GM12878 (cell line): ENCODE measurements at regions of chr13 and their contacts with region 1.

Region 1: DNA sequence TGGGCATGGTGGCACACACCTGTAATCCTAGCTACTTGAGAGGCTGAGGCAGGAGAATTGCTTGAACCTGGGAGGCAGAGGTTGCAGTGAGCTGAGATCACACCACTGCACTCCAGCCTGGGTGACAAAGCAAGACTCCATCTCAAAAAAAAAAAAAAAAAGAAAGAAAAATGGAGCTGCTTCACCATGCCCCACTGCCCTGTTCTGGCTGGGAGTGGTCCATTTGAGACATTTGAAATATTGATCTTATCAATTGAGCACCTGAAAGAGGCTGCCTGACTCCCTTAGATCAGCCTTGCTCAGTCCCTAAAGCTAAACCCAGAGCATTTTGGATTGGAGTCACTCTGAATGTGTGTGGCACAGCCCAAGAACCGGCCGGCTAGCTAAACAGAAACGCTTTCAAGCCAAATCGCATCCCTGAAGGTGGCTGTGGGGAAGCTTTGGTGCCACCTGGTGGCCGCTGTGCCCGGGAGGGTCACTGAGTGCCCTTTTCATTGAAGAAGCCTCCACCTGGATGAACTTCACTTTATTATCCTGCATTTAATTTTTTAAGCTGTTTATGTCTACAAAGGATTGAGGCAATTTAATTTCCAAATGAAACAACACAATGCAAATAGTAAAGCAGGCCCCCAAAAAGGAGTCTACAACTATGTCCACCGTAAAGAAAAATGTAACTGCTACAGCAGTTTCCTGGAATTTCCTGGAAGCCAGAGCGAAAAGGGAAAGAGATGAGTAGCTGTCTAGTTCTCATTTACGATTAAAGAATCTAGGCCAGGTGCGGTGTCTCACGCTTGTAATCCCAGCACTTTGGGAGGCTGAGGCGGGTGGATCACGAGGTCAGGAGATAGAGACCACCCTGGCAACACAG is 53.1 kb upstream of the SERPINE3 start:
- DNase-seq: peak; percentile 7
- ATAC-seq: peak; percentile 98
- H3K4me3 ChIP-seq: no peak overlapping the region
- H3K27ac ChIP-seq: no peak overlapping the region
- H3K4me1 ChIP-seq: no peaks in the 10 kb centered on the region
- H3K27me3 ChIP-seq: no peaks in the 10 kb centered on the region; a peak in 1 of 4 replicates
- CTCF ChIP-seq: peak; percentile 86 to 94 (median 93)
- EP300 ChIP-seq: no peak
- POLR2A ChIP-seq: no peak
- RAD21 ChIP-seq: peak; percentile 85

Region 2: DNA sequence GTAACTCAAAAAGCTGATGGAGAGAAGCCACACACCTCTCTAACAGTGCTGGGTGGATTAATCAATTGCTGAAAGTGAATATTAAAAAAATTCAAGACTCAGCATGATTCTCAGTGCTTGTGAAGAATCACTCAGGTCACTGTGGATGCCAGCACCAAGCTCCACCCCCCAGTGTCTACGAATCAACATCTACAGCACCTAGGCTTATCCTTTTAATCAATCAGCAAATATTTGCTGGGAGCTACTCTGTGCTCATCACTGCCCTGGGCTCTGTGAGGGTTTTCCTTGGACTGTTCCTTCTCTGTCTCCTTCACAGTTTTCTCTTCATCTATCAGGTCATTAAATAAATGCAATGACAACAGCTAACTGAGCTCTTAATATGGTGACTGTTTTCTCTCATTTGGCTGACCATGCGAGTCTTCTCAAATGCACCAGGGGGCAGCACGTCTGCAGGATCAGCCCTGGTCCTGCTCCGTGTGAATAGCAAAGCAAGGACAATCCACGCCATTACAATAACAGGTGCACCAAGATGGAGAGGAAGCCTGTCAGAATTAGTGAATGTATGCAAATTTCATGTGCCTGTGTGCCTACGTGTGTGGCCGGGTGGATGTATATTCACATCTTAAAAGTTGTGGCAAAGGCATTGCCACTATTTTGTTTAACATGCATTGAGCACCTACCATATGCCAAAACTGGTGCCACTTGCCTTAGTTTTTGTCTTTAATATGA is 160.7 kb before region 1 on chr13:
- CTCF ChIA-PET with region 1: interaction called, 242 read pairs
- POLR2A ChIA-PET with region 1: interaction called, 7 read pairs
- RAD21 ChIA-PET with region 1: interaction called, 131 read pairs
- SMC1A ChIA-PET with region 1: interaction called, 112 read pairs
- in situ Hi-C with region 1: loop called (anchors 5 kb)
- intact Hi-C with region 1: loop called (anchors 1 kb)
- DNase-seq: peak; percentile 16
- ATAC-seq: peak; percentile 89
- H3K4me3 ChIP-seq: no peak overlapping the region
- H3K27ac ChIP-seq: no peak overlapping the region
- H3K4me1 ChIP-seq: no peaks in the 10 kb centered on the region
- H3K27me3 ChIP-seq: no peaks in the 10 kb centered on the region; a peak in 1 of 4 replicates
- CTCF ChIP-seq: peak; percentile 78 to 89 (median 86)
- EP300 ChIP-seq: no peak
- POLR2A ChIP-seq: no peak
- RAD21 ChIP-seq: peak; percentile 89

Region 3: GRCh38 chr13:51148952-51149573 is 137.3 kb before region 1 on chr13:
- CTCF ChIA-PET with region 1: interaction called, 26 read pairs
- POLR2A ChIA-PET with region 1: no interaction called
- RAD21 ChIA-PET with region 1: interaction called, 11 read pairs
- SMC1A ChIA-PET with region 1: interaction called, 4 read pairs
- in situ Hi-C with region 1: no loop called
- intact Hi-C with region 1: no loop called
- DNase-seq: no peak
- ATAC-seq: peak; percentile 24; the same call in 1 of the 3 replicates
- H3K4me3 ChIP-seq: no peak overlapping the region
- H3K27ac ChIP-seq: no peak overlapping the region
- H3K4me1 ChIP-seq: no peaks in the 10 kb centered on the region
- H3K27me3 ChIP-seq: peaks cover 3 to 6% of the 10 kb centered on the region in 2 experiments; a peak in 2 of 4 replicates
- CTCF ChIP-seq: peak; percentile 21 to 40 (median 28); a peak in 4 of 6 replicates
- EP300 ChIP-seq: no peak
- POLR2A ChIP-seq: no peak
- RAD21 ChIP-seq: peak; percentile 59

Region 4: DNA sequence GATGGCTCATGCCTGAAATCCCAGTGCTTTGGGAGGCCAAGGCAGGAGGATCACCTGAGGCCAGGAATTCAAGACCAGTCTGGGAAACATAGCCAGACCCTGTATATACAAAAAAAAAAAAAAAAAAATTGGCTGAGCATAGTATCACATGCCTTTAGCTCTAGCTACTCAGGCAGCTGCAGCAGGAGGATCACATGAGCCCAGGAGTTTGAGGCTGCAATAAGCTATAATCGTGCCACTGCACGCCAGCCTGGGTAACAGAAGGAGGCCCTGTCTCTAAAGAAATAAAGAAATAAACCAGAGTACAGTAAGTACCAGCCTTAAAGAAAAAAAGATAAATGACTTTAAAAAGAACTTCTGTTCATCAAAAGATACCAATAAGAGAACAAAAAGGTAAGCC is 11.3 kb before region 1 on chr13:
- CTCF ChIA-PET with region 1: interaction called, 18 read pairs
- POLR2A ChIA-PET with region 1: no interaction called
- RAD21 ChIA-PET with region 1: interaction called, 7 read pairs
- SMC1A ChIA-PET with region 1: interaction called, 5 read pairs
- in situ Hi-C with region 1: no loop called
- intact Hi-C with region 1: no loop called
- DNase-seq: no peak
- ATAC-seq: no peak
- H3K4me3 ChIP-seq: no peak overlapping the region
- H3K27ac ChIP-seq: no peak overlapping the region
- H3K4me1 ChIP-seq: no peaks in the 10 kb centered on the region
- H3K27me3 ChIP-seq: peaks cover 3 to 9% of the 10 kb centered on the region in 2 experiments; a peak in 1 of 4 replicates
- CTCF ChIP-seq: no peak
- EP300 ChIP-seq: no peak
- POLR2A ChIP-seq: no peak
- RAD21 ChIP-seq: no peak

Region 5: GRCh38 chr13:51303063-51303552 is 16.7 kb after region 1 on chr13:
- CTCF ChIA-PET with region 1: interaction called, 25 read pairs
- POLR2A ChIA-PET with region 1: no interaction called
- RAD21 ChIA-PET with region 1: interaction called, 4 read pairs
- SMC1A ChIA-PET with region 1: interaction called, 4 read pairs
- in situ Hi-C with region 1: no loop called
- intact Hi-C with region 1: no loop called
- DNase-seq: no peak
- ATAC-seq: no peak
- H3K4me3 ChIP-seq: no peak overlapping the region
- H3K27ac ChIP-seq: no peak overlapping the region
- H3K4me1 ChIP-seq: no peaks in the 10 kb centered on the region
- H3K27me3 ChIP-seq: no peaks in the 10 kb centered on the region
- CTCF ChIP-seq: no peak
- EP300 ChIP-seq: no peak
- POLR2A ChIP-seq: no peak
- RAD21 ChIP-seq: no peak

Region 6: GRCh38 chr13:51803422-51804294 is 517.3 kb after region 1 on chr13 and contains the start of gene DHRS12:
- CTCF ChIA-PET with region 1: interaction called, 78 read pairs
- POLR2A ChIA-PET with region 1: no interaction called
- RAD21 ChIA-PET with region 1: interaction called, 3 read pairs
- SMC1A ChIA-PET with region 1: interaction called, 49 read pairs
- in situ Hi-C with region 1: no loop called
- intact Hi-C with region 1: loop called (anchors 5 kb)
- DNase-seq: peak; percentile 58
- ATAC-seq: peak; percentile 86
- H3K4me3 ChIP-seq: peak within 1 kb of the TSS; percentile 82
- H3K27ac ChIP-seq: peak within 1 kb of the TSS; percentile 91
- H3K4me1 ChIP-seq: peaks cover 17% of the 10 kb centered on the region
- H3K27me3 ChIP-seq: no peaks in the 10 kb centered on the region
- CTCF ChIP-seq: no peak; a peak in 1 of 6 replicates
- EP300 ChIP-seq: peak in 1 of 2 experiments; percentile 30; a peak in 1 of 4 replicates
- POLR2A ChIP-seq: peak; percentile 95
- RAD21 ChIP-seq: 0 out of 2 replicates have a peak, but pooled peaks have one; percentile 14
- polyA plus RNA-seq, gene DHRS12: 2.9 to 4.0 TPM